Activated CD8-positive, alpha-beta T cell treated with anti-CD3 and anti-CD28 coated beads for 36 hours (primary cell): ENCODE measurements at regions of chr10 and their contacts with region 1.

Region 1: DNA sequence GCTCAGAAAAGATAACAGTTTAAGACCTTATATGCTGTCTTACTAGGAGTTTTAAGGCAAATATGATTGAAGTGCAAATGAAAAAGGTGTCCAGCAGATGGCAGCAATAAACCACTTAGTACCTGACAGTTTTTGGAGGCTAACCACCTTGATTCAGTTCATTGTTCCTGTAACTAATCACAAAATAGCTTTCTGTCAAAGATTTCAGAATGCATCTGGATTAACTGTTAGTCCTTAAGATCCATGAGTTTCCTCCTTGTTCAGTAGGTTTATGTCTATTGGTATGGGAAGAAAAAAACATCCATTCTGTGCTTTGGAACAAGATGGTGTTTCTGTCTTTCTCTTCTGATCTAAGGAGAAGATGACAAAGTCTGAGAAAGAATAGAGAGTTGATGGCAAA is 46.6 kb downstream of the CCSER2 start:
- DNase-seq: peak; percentile 61
- ATAC-seq: peak; percentile 62
- H3K4me3 Mint-ChIP-seq: no peak overlapping the region
- H3K27ac Mint-ChIP-seq: no peak overlapping the region
- H3K4me1 Mint-ChIP-seq: peaks cover 43% of the 10 kb centered on the region
- H3K27me3 Mint-ChIP-seq: no peaks in the 10 kb centered on the region
- CTCF ChIP-seq: peak; percentile 85

Region 2: GRCh38 chr10:84397735-84398144 is 22.7 kb after region 1 on chr10:
- CTCF ChIA-PET with region 1: interaction called, 10 read pairs
- POLR2A ChIA-PET with region 1: no interaction called
- intact Hi-C with region 1: no loop called
- DNase-seq: no peak
- ATAC-seq: no peak
- H3K4me3 Mint-ChIP-seq: no peak overlapping the region
- H3K27ac Mint-ChIP-seq: no peak overlapping the region
- H3K4me1 Mint-ChIP-seq: peaks cover 35% of the 10 kb centered on the region
- H3K27me3 Mint-ChIP-seq: no peaks in the 10 kb centered on the region
- CTCF ChIP-seq: no peak

Region 3: GRCh38 chr10:84493951-84494848 is 119.2 kb after region 1 on chr10:
- CTCF ChIA-PET with region 1: no interaction called
- POLR2A ChIA-PET with region 1: no interaction called
- intact Hi-C with region 1: no loop called
- DNase-seq: no peak
- ATAC-seq: no peak
- H3K4me3 Mint-ChIP-seq: no peak overlapping the region
- H3K27ac Mint-ChIP-seq: no peak overlapping the region
- H3K4me1 Mint-ChIP-seq: peaks cover 24% of the 10 kb centered on the region
- H3K27me3 Mint-ChIP-seq: no peaks in the 10 kb centered on the region
- CTCF ChIP-seq: no peak

Region 4: GRCh38 chr10:84531396-84531795 is 156.4 kb after region 1 on chr10:
- CTCF ChIA-PET with region 1: interaction called, 100 read pairs
- POLR2A ChIA-PET with region 1: no interaction called
- intact Hi-C with region 1: no loop called
- DNase-seq: no peak
- ATAC-seq: no peak
- H3K4me3 Mint-ChIP-seq: no peak overlapping the region
- H3K27ac Mint-ChIP-seq: no peak overlapping the region
- H3K4me1 Mint-ChIP-seq: peaks cover 5% of the 10 kb centered on the region
- H3K27me3 Mint-ChIP-seq: no peaks in the 10 kb centered on the region
- CTCF ChIP-seq: no peak

Region 5: DNA sequence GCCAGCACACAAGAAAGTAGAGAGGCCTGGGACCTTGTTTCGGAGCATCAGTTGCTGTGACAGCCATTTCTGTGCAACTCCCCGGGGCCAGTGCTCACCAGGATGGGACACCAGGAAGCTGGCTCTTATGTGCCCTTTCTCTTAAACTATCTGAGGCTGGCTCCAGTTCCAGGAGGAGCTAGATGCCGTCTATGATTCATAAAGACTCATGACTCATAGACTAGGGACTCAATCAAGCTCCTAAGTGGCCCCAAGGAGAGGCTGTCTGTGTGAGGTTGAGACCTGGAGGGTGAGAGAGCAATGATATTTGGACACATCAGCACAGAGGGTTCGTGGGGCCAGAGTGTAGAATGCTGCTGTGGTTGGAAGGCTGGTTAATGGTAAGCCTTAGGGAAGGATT is 533.5 kb after region 1 on chr10:
- CTCF ChIA-PET with region 1: no interaction called
- POLR2A ChIA-PET with region 1: no interaction called
- intact Hi-C with region 1: no loop called
- DNase-seq: no peak
- ATAC-seq: no peak
- H3K4me3 Mint-ChIP-seq: no peak overlapping the region
- H3K27ac Mint-ChIP-seq: no peak overlapping the region
- H3K4me1 Mint-ChIP-seq: no peaks in the 10 kb centered on the region
- H3K27me3 Mint-ChIP-seq: no peaks in the 10 kb centered on the region
- CTCF ChIP-seq: no peak